ENCODE measurements at regions of chr3 and their contacts with region 1.

Region 1: GRCh38 chr3:159804726-159805410 is 183.8 kb upstream of the IL12A start:
- DNase-seq: peak; percentile 74
- H3K4me3 ChIP-seq: no peak overlapping the region
- H3K27ac ChIP-seq: no peak overlapping the region
- H3K27me3 ChIP-seq: no peaks in the 10 kb centered on the region
- CTCF ChIP-seq: peak; percentile 99

Region 2: GRCh38 chr3:159260049-159260662 is 544.7 kb before region 1 on chr3:
- CTCF ChIA-PET with region 1: interaction called, 22 read pairs
- POLR2A ChIA-PET with region 1: no interaction called
- DNase-seq: peak; percentile 68
- H3K4me3 ChIP-seq: no peak overlapping the region
- H3K27ac ChIP-seq: no peak overlapping the region
- H3K27me3 ChIP-seq: peaks cover 2% of the 10 kb centered on the region
- CTCF ChIP-seq: peak; percentile 75

Region 3: GRCh38 chr3:159586571-159587202 is 218.2 kb before region 1 on chr3:
- CTCF ChIA-PET with region 1: interaction called, 17 read pairs
- POLR2A ChIA-PET with region 1: no interaction called
- DNase-seq: peak; percentile 11
- H3K4me3 ChIP-seq: no peak overlapping the region
- H3K27ac ChIP-seq: no peak overlapping the region
- H3K27me3 ChIP-seq: peaks cover 3% of the 10 kb centered on the region
- CTCF ChIP-seq: peak; percentile 77

Region 4: GRCh38 chr3:159616212-159616825 is 188.5 kb before region 1 on chr3:
- CTCF ChIA-PET with region 1: interaction called, 65 read pairs
- POLR2A ChIA-PET with region 1: interaction called, 4 read pairs
- DNase-seq: no peak
- H3K4me3 ChIP-seq: no peak overlapping the region
- H3K27ac ChIP-seq: no peak overlapping the region
- H3K27me3 ChIP-seq: no peaks in the 10 kb centered on the region
- CTCF ChIP-seq: peak; percentile 70

Region 5: DNA sequence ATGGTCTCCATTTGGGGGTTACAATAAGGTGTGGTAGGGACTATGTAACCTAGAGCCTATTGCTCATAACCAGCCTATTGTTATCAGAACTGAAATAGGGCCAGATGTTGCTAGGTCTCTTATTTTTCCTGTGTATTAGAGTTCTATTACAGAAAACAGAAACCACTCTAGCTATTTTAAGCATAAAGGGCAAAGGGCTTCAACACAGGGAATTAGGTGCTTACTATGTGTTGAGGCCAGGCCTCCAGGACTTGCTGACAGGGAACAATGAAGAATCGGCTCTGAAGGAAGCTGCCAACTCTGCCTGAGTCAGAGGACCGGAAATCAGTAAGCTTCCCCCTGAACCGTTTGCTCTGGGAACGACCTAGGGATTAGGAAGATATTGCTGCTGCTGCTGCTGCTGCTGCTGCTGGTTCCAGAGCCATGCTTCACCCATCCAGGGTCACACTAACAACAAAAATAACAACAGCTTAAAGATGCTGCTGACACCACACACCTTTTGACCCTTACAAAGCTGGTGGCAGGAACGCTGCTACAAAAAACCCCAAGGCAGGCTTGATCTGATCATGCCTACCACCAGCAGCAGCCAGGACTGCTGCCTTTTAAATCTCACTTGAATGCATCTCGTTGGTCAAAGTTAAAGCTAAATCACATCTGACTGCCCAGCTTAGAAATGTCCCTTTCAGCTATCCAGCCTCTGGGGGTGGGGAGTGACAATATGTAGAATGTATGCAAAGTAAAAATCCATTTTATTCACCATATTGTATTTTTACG is 93.1 kb before region 1 on chr3:
- CTCF ChIA-PET with region 1: no interaction called
- POLR2A ChIA-PET with region 1: no interaction called
- DNase-seq: peak; percentile 63
- H3K4me3 ChIP-seq: no peak overlapping the region
- H3K27ac ChIP-seq: peak overlapping the region; percentile 13
- H3K27me3 ChIP-seq: no peaks in the 10 kb centered on the region
- CTCF ChIP-seq: no peak

Region 6: GRCh38 chr3:159763602-159764489 is 41.0 kb before region 1 on chr3:
- CTCF ChIA-PET with region 1: interaction called, 47 read pairs
- POLR2A ChIA-PET with region 1: interaction called, 9 read pairs
- DNase-seq: peak; percentile 54
- H3K4me3 ChIP-seq: peak overlapping the region; percentile 75
- H3K27ac ChIP-seq: peak overlapping the region; percentile 95
- H3K27me3 ChIP-seq: no peaks in the 10 kb centered on the region
- CTCF ChIP-seq: peak; percentile 25

Region 7: DNA sequence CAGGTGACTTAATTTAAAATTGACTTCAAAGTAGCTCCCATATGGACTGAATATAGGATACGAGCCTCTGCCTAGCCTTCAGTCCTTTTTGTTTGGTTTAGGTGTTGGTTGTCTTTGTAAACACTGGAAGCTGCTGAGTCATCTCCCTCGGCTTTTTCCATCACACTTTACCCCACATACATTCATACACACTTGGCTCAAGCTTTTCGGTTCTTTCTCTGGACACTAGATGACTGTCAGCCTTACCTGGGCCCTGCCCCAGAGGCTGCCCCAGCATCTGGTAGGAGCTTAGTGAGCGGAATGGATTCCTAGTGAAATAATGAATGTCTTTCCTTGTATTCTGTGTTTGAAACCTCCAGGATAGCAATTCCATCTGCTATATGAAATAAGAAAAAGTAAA is 17.7 kb before region 1 on chr3:
- CTCF ChIA-PET with region 1: interaction called, 31 read pairs
- POLR2A ChIA-PET with region 1: no interaction called
- DNase-seq: peak; percentile 67
- H3K4me3 ChIP-seq: no peak overlapping the region
- H3K27ac ChIP-seq: peak overlapping the region; percentile 77
- H3K27me3 ChIP-seq: no peaks in the 10 kb centered on the region
- CTCF ChIP-seq: no peak

Region 8: DNA sequence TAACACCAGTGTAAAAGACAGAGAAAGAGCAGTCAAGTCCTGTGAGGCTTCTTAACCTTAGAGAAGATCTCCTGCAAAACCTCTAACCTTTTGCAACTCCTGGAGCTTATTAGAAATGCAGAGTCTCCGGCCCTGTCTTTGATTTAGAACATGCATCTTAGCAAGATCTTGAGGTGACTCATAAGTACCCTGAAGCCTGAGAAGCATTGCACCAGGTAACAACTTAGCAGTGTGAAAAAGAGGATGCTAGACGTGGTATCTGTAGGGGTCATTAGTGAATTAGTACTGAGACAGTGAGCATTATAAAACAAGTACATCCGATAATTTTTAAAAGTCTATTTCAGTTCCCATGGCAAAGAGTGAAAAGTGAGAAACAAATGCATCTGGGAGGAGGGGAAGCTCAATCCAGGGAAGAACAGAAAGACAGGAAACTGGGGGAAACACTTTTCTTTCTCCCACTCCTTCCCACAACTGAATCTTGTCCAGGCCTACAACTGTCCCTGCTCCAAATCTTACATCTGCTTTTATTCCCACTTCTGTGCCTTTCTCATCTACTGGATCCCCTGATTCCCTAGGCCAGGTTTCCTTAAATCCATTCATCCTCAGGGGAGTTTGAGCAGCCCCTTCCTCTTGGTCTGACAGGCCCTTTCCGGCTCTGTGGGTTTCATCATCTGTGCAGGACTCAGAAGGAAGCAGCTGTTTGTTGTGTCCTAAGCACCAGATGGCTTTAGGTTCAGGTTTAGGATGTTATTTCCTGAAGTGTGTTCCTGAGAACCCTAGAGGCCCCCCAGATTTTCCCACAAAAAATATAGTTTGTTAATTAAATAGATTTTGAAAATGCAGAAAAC is 55.6 kb after region 1 on chr3:
- CTCF ChIA-PET with region 1: no interaction called
- POLR2A ChIA-PET with region 1: no interaction called
- DNase-seq: no peak
- H3K4me3 ChIP-seq: no peak overlapping the region
- H3K27ac ChIP-seq: no peak overlapping the region
- H3K27me3 ChIP-seq: no peaks in the 10 kb centered on the region
- CTCF ChIP-seq: no peak

Region 9: DNA sequence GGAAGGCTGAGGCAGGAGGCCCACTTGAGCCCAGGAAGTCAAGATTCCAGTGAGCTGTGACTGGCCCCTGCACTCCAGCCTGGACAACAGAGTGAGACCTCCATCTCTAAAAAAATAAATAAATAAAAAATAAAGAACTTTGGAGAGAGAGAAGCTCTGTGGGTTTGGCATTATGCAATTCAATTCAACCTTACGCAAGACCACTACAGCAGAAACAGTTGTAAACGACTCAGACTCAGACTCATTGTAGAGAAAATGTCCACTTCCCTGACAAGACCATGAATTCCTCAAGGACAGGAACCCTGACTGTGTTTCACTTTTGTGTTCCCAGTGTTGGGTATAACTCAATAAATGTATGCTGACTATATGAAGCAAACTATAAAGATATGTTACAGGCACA is 330.1 kb after region 1 on chr3:
- CTCF ChIA-PET with region 1: no interaction called
- POLR2A ChIA-PET with region 1: no interaction called
- DNase-seq: no peak
- H3K4me3 ChIP-seq: no peak overlapping the region
- H3K27ac ChIP-seq: no peak overlapping the region
- H3K27me3 ChIP-seq: no peaks in the 10 kb centered on the region
- CTCF ChIP-seq: no peak

Measured in AG04450 (cell line).